Left ventricle myocardium superior (tissue), 1 donor: ENCODE measurements at regions of chr12 and their contacts with region 1.

Region 1: GRCh38 chr12:21940549-21941505 is at the start of gene ABCC9:
- DNase-seq: peak; percentile 81
- ATAC-seq: peak; percentile 84
- total RNA-seq, gene ABCC9: 83.1 TPM

Region 2: GRCh38 chr12:21773263-21773741 is 167.5 kb before region 1 on chr12:
- intact Hi-C with region 1: loop called (anchors 2 kb)
- DNase-seq: peak; percentile 81
- ATAC-seq: peak; percentile 58